OCI-LY7 (cell line): ENCODE measurements at regions of chr3 and their contacts with region 1.

Region 1: DNA sequence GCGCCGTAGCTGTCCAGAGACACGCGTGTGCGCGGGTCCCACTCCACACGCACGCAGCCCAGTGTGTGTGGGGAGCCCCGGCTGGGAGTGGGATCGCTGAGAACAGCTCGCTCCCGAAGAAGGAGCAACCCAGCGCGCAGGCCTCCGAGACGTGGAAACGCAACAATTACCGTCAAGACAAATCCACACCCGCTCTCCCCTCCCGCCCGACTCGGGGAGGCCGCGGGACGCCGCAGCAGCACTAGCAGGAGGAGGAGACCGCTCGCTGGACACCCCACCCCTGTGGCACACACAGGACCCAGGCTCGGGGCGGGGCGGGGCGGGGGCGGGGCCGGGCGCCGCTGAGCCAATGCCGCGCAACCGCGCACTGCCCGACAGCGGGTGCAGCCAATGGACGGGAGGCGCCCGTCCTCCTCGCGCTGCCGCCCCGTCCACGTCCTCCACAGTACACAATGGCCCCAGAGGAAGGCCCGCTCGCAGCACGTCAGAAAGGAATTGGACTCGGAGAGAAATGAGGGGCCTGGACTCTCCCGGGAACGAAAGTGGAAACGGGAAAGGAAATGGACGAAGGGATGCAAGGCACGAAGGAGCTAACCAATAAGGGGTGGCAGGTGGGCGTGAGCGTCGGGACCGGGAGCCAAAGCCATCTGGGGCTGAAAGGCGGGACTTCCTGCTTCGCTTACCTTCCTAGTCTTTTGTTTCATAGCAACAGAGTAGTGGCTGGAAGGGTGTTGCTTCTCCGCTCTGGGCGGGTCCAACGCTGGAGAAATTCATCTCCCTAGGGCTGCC is at the start of gene CBLB:
- DNase-seq: peak; percentile 90
- H3K4me3 ChIP-seq: peak within 1 kb of the TSS; percentile 98
- H3K27ac ChIP-seq: peak within 1 kb of the TSS; percentile 62
- H3K4me1 ChIP-seq: peaks cover 41% of the 10 kb centered on the region
- CTCF ChIP-seq: no peak
- total RNA-seq, gene CBLB: 24.5 and 57.7 TPM in 2 replicates

Region 2: DNA sequence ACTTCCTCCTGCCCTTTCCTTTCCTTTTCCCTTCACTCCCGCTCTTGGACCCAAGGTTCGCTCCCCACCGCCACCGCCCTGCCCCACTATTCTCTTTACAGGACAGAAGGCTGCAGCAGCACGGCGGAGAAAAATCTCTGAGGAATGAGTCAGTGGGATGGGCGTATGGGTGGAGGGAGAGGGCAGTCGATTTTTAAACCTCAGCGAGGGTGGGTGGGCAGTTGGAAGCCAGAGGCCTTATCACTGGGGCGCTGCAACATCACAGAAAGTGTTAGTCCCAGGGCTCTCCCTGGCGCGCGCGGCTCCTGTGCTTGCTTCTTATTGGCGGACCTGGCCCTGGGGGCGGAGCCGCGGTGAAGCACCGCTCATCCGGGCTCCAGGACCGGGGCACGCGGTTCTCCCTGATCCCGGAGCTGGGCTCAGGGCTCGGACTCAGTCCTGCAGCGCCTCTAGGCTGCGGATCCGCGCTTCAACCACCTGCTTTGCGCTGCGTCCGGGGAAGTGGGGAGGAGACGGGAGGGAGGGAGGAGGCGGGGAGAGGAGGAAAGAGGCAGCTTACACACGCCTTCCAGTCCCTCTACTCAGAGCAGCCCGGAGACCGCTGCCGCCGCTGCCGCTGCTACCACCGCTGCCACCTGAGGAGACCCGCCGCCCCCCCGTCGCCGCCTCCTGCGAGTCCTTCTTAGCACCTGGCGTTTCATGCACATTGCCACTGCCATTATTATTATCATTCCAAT is 502.4 kb before region 1 on chr3 and contains the start of gene ALCAM:
- CTCF ChIA-PET with region 1: no interaction called
- POLR2A ChIA-PET with region 1: no interaction called
- intact Hi-C with region 1: loop called (anchors 5 kb)
- DNase-seq: peak; percentile 91
- H3K4me3 ChIP-seq: peak within 1 kb of the TSS; percentile 74
- H3K27ac ChIP-seq: peak within 1 kb of the TSS; percentile 92
- H3K4me1 ChIP-seq: peaks cover 27% of the 10 kb centered on the region
- CTCF ChIP-seq: peak; percentile 46; the same call in 1 of the 2 replicates
- total RNA-seq, gene ALCAM: 40.4 and 51.3 TPM in 2 replicates

Region 3: GRCh38 chr3:105700575-105700974 is 168.4 kb before region 1 on chr3:
- CTCF ChIA-PET with region 1: no interaction called
- POLR2A ChIA-PET with region 1: no interaction called
- intact Hi-C with region 1: no loop called
- DNase-seq: no peak
- H3K4me3 ChIP-seq: no peak overlapping the region
- H3K27ac ChIP-seq: no peak overlapping the region
- H3K4me1 ChIP-seq: no peaks in the 10 kb centered on the region
- CTCF ChIP-seq: no peak

Region 4: GRCh38 chr3:105729667-105730066 is 139.3 kb before region 1 on chr3:
- CTCF ChIA-PET with region 1: no interaction called
- POLR2A ChIA-PET with region 1: no interaction called
- intact Hi-C with region 1: no loop called
- DNase-seq: no peak
- H3K4me3 ChIP-seq: no peak overlapping the region
- H3K27ac ChIP-seq: no peak overlapping the region
- H3K4me1 ChIP-seq: no peaks in the 10 kb centered on the region
- CTCF ChIP-seq: no peak

Region 5: GRCh38 chr3:105798381-105798934 is 70.5 kb before region 1 on chr3:
- CTCF ChIA-PET with region 1: no interaction called
- POLR2A ChIA-PET with region 1: interaction called, 10 read pairs
- intact Hi-C with region 1: loop called (anchors 2 kb)
- DNase-seq: peak; percentile 90
- H3K4me3 ChIP-seq: peak overlapping the region; percentile 37
- H3K27ac ChIP-seq: peak overlapping the region; percentile 81
- H3K4me1 ChIP-seq: peaks cover 68% of the 10 kb centered on the region
- CTCF ChIP-seq: no peak

Region 6: GRCh38 chr3:105836533-105836932 is 32.4 kb before region 1 on chr3:
- CTCF ChIA-PET with region 1: interaction called, 4 read pairs
- POLR2A ChIA-PET with region 1: interaction called, 28 read pairs
- intact Hi-C with region 1: loop called (anchors 2 kb)
- DNase-seq: peak; percentile 71
- H3K4me3 ChIP-seq: peak overlapping the region; percentile 65
- H3K27ac ChIP-seq: peak overlapping the region; percentile 77
- H3K4me1 ChIP-seq: peaks cover 77% of the 10 kb centered on the region
- CTCF ChIP-seq: peak; percentile 61

Region 7: DNA sequence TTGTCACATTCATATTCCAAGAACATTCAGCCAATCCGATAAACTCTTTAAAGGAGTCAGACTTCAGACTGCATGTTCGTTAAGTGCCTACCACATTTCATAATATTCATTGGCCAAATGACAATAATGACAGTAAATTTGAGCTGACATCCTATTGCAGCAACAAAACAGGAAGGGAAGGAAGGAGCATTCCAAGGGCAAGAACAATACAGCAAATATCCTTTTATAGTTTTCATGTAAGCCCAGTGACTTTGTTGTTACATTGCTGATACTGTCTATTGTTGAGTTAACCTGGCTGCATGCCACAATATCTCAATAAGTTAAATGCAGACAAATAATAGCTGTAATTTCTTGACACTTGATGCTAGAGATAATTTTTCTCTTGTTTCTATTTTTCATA is 16.3 kb after region 1 on chr3:
- CTCF ChIA-PET with region 1: no interaction called
- POLR2A ChIA-PET with region 1: interaction called, 54 read pairs
- intact Hi-C with region 1: no loop called
- DNase-seq: no peak
- H3K4me3 ChIP-seq: no peak overlapping the region
- H3K27ac ChIP-seq: no peak overlapping the region
- H3K4me1 ChIP-seq: peaks cover 15% of the 10 kb centered on the region
- CTCF ChIP-seq: no peak

Region 8: GRCh38 chr3:106025151-106025722 is 156.3 kb after region 1 on chr3:
- CTCF ChIA-PET with region 1: no interaction called
- POLR2A ChIA-PET with region 1: no interaction called
- intact Hi-C with region 1: no loop called
- DNase-seq: no peak
- H3K4me3 ChIP-seq: no peak overlapping the region
- H3K27ac ChIP-seq: no peak overlapping the region
- H3K4me1 ChIP-seq: no peaks in the 10 kb centered on the region
- CTCF ChIP-seq: no peak